HEK293 (cell line): ENCODE measurements at regions of chr7 and their contacts with region 1.

Region 1: DNA sequence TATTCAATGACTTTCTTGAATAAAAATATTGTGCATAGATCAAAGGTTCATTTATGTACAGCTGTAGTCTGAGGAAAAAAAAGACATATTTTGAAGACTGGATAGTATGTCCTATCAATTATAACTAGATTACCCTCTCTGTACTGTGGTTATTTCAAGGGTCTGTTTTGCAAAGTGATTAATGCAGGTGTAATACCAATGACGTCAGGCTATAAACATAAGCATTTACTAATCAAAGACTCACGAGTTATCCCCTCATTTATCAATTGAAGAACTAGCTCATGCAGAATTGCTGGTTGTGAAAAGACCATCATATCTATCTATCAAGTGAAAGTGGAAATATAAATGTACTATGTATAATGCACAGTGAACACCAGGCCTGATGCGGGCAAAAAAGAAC is 213.6 kb upstream of the HGF start:
- H3K4me3 ChIP-seq: no peak overlapping the region
- H3K27ac ChIP-seq: no peak overlapping the region
- H3K4me1 ChIP-seq: no peaks in the 10 kb centered on the region
- CTCF ChIP-seq: no peak

Region 2: DNA sequence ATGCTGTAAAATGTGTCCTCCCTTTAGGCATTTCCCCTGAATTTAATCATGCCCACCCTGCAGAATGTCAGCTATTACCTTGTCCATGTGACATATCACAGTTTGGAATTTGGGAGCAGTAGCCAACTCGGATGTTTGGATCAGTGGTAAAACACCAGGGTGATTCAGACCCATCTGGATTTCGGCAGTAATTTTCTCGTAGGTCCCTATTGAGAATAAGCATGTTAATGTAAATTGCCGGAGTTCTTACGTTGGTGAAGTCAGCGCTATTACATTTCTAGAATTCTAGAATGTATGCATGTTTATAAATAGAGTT is 257.6 kb before region 1 on chr7:
- CTCF ChIA-PET with region 1: no interaction called
- POLR2A ChIA-PET with region 1: no interaction called
- H3K4me3 ChIP-seq: no peak overlapping the region
- H3K27ac ChIP-seq: no peak overlapping the region
- H3K4me1 ChIP-seq: no peaks in the 10 kb centered on the region
- CTCF ChIP-seq: no peak

Region 3: DNA sequence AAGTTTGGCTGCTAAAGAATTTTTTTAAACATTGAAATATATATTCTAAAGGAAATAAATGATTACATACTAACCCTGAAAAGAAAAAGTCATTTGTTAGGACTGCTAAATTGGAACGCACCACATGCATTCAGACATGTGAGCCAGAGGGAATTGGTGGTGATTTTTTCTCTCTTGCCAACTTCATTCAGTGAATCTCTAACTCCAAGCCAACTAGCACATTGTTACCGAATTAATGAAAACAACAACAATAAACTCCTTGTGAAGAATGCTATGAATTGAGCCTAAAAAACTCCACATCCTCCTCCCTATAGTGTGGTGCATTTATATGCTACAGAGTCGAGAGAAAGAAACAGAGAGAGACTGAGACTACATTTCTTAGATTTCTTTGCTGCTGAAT is 595.6 kb after region 1 on chr7:
- CTCF ChIA-PET with region 1: no interaction called
- POLR2A ChIA-PET with region 1: interaction called, 10 read pairs
- H3K4me3 ChIP-seq: no peak overlapping the region
- H3K27ac ChIP-seq: no peak overlapping the region
- H3K4me1 ChIP-seq: no peaks in the 10 kb centered on the region
- CTCF ChIP-seq: no peak